WTC11 (cell line): ENCODE measurements at regions of chr6 and their contacts with region 1.

Region 1: DNA sequence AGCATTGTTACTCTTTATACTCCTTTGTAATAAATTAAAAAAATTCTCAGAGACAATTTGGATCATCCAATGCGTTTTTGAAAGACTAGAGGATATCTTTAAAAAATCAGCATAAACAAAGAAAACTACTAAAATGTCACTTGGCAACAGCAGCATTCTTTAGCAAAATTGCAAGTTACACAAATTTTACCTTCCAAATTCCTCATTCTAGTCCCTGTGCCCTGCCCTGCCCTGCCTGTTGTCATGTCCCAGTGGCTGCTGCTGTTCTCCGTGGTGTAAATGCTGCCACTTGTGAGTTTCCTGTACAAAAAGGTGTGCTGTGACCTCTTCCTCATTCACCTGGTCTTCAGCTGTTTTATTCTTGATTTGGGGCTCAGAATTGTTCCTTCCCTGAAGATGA is 83.2 kb downstream of the CDC5L start:
- DNase-seq: no peak
- ATAC-seq: no peak
- H3K4me3 Mint-ChIP-seq: no peak overlapping the region
- H3K27ac Mint-ChIP-seq: no peak overlapping the region
- H3K4me1 Mint-ChIP-seq: peaks cover 36% of the 10 kb centered on the region
- H3K27me3 Mint-ChIP-seq: peaks cover 2% of the 10 kb centered on the region; the same call in 1 of the 2 replicates
- CTCF ChIP-seq: no peak

Region 2: GRCh38 chr6:44456070-44456965 is 14.4 kb before region 1 on chr6:
- CTCF ChIA-PET with region 1: interaction called, 38 read pairs
- POLR2A ChIA-PET with region 1: no interaction called
- DNase-seq: no peak
- ATAC-seq: peak; percentile 82
- H3K4me3 Mint-ChIP-seq: no peak overlapping the region
- H3K27ac Mint-ChIP-seq: no peak overlapping the region
- H3K4me1 Mint-ChIP-seq: no peaks in the 10 kb centered on the region
- H3K27me3 Mint-ChIP-seq: no peaks in the 10 kb centered on the region; the same call in 1 of the 2 replicates
- CTCF ChIP-seq: peak; percentile 76

Region 3: DNA sequence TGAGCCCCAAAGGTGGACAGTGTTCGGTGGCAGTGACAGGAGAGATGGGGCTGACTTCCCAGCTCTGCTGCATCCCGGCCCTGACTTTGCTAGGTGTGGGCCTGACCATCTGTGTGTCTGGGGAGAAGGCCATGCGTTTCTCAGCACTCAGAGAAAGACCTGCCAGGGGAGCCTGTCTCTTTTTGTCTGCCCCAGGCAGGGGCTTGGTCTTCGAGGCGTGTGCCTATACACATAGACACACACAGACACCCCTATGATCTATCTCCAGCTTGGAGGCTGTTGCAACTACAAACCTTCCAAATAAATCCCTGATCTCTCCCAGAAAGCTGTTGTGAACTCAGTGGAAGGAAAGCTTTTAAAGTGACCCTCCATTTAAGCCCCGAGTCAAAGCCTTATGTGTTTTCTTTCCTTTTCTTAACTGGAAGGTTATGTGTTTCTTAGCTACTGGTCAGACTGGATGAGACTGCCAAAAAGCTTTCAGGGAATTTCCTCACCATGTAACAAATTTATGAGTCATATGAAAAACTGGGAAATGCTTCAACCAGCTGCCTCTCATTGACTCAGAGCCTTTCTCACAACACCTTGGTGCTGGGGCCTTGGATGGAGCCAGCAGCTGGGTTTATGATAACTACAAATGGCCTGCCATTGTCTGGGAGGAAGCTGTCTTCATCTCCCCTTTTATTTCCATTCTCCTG is 19.3 kb after region 1 on chr6:
- CTCF ChIA-PET with region 1: interaction called, 82 read pairs
- POLR2A ChIA-PET with region 1: interaction called, 4 read pairs
- DNase-seq: no peak
- ATAC-seq: no peak
- H3K4me3 Mint-ChIP-seq: no peak overlapping the region
- H3K27ac Mint-ChIP-seq: no peak overlapping the region
- H3K4me1 Mint-ChIP-seq: peaks cover 26% of the 10 kb centered on the region
- H3K27me3 Mint-ChIP-seq: no peaks in the 10 kb centered on the region
- CTCF ChIP-seq: no peak